ENCODE measurements at regions of chr16 and their contacts with region 1.

Region 1: DNA sequence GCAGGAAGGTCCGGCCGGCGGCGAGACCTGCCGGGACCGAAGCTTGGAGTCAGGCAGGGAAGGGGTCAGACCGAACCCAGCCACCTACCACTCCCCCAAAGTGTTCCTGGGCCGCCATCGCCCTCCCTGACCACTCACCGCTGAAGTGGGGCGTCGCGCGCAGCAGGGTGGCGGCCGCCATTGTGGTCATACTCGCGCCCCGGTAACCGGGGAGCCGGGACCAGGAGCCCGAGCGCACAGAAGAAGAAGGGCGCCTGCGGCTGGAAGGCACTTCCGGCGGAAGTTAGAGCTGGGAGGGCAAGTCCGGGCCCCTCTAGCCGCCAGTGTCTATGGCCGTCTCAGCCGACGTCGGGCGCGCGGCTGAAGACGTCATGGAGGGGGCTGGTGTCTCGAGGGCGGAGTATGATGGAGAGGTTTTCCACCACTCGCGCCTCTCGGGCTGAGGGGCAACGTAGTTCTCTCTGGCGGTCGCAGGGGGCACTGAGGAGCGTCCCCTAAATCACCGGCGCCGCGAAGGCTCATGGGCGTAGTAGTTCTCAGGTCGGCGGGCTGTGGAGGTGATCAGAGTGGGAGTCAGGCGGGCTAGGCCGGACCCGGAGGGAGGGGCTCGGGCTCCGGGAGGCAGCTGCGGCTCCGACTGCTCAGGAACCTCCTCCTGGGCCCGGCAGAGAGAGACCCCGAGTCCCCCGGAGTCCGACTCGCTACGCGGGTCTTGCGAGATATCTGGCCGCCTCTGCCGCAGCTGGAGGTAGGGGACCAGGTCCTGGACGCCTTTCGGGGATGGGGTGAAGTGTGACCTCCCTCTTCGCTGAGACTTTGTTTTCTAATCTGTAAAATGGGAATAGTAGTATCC is at the start of gene TUFM:
- DNase-seq: peak; percentile 91 to 99 (median 94)
- ATAC-seq: peak; percentile 96
- H3K4me3 ChIP-seq: peak within 1 kb of the TSS; percentile 98
- H3K27ac ChIP-seq: peak within 1 kb of the TSS; percentile 87
- H3K4me1 ChIP-seq: peaks cover 4 to 24% of the 10 kb centered on the region in 2 experiments; a peak in 3 of 5 replicates
- H3K27me3 ChIP-seq: no peaks in the 10 kb centered on the region
- CTCF ChIP-seq: peak; percentile 87 to 93 (median 93)
- EP300 ChIP-seq: peak; percentile 50
- POLR2A ChIP-seq: peak; percentile 88
- RAD21 ChIP-seq: peak; percentile 29 to 35; a peak in 2 of 4 replicates
- polyA plus RNA-seq, gene TUFM: 34.1 to 71.2 TPM

Region 2: DNA sequence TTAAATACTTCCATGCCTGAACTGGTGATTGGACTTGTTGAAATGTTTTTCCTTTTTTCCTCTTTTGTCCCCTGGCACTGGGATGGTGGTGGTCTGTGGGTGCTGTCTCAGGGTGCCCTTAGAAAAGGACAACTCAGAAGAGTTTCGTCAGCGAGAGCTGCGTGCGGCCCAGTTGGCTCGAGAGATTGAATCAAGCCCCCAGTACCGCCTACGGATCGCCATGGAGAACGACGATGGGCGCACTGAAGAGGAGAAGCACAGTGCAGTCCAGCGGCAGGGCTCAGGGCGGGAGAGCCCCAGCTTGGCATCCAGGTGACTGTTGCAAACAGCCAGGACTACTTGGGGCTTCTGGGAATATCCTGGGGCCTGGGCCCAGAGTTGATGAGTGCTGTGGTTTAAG is 16.6 kb before region 1 on chr16:
- CTCF ChIA-PET with region 1: no interaction called
- POLR2A ChIA-PET with region 1: interaction called, 100 read pairs
- in situ Hi-C with region 1: no loop called
- intact Hi-C with region 1: no loop called
- DNase-seq: no peak
- ATAC-seq: no peak
- H3K4me3 ChIP-seq: no peak overlapping the region
- H3K27ac ChIP-seq: no peak overlapping the region
- H3K4me1 ChIP-seq: peaks cover 9 to 13% of the 10 kb centered on the region in 2 experiments
- H3K27me3 ChIP-seq: no peaks in the 10 kb centered on the region
- CTCF ChIP-seq: no peak
- EP300 ChIP-seq: no peak
- POLR2A ChIP-seq: no peak
- RAD21 ChIP-seq: no peak

Region 3: GRCh38 chr16:28834873-28835865 is 11.1 kb before region 1 on chr16:
- CTCF ChIA-PET with region 1: no interaction called
- POLR2A ChIA-PET with region 1: interaction called, 100 read pairs
- in situ Hi-C with region 1: no loop called
- intact Hi-C with region 1: no loop called
- DNase-seq: no peak
- ATAC-seq: no peak
- H3K4me3 ChIP-seq: no peak overlapping the region
- H3K27ac ChIP-seq: no peak overlapping the region
- H3K4me1 ChIP-seq: peaks cover 0 to 20% of the 10 kb centered on the region in 2 experiments; a peak in 2 of 5 replicates
- H3K27me3 ChIP-seq: no peaks in the 10 kb centered on the region
- CTCF ChIP-seq: no peak
- EP300 ChIP-seq: no peak
- POLR2A ChIP-seq: peak; percentile 56; the same call in 1 of the 2 replicates
- RAD21 ChIP-seq: no peak

Region 4: DNA sequence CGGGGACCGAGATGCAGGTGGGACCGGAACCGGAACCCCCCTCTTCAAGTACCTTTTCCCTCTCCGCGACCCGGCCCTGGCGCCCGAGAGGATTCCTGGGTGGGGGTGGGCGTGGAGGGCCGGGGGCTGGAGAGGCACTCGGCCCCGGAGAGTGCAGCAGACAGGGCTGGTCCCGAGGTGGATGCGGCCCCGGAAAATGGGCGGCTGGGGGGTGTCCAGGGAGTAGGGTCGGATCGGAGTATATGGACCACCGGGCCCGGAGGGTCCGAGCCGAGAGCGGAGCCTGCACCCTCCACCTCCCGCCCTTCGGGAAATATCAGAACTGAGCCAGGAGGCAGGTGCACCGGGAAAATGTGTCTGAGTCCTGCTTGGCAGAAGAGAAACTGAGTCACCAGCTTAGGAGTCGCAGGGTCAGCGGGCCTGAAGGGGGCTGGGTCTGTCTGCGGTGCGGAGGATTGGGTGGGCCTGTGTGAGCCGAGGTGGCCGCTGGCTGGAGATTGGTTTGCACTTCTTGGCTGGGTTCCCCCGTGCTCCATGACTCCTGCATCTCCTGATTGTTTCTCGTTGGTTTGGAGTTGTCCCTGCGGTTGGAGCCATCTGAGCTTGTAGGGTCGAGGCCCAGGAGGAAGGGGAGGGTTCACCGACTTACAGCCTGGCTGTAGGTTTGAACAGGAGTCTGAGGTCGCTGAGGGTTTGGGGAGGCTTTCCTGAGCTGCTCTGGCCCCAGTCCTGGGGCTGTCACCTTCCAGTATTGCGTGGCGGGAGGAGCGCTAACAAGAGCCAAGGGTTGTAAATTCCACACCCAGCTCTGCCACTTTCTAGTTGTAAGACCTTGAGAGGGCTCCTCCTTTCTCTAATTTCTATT is 17.9 kb after region 1 on chr16:
- CTCF ChIA-PET with region 1: interaction called, 5 read pairs
- POLR2A ChIA-PET with region 1: interaction called, 99 read pairs
- in situ Hi-C with region 1: no loop called
- intact Hi-C with region 1: loop called (anchors 1 kb)
- DNase-seq: peak in 3 of 4 experiments; percentile 24 to 84 (median 41)
- ATAC-seq: peak; percentile 18
- H3K4me3 ChIP-seq: peak overlapping the region; percentile 88
- H3K27ac ChIP-seq: peak overlapping the region; percentile 99
- H3K4me1 ChIP-seq: peaks cover 14 to 28% of the 10 kb centered on the region in 2 experiments
- H3K27me3 ChIP-seq: no peaks in the 10 kb centered on the region
- CTCF ChIP-seq: no peak
- EP300 ChIP-seq: no peak
- POLR2A ChIP-seq: no peak
- RAD21 ChIP-seq: no peak

Region 5: DNA sequence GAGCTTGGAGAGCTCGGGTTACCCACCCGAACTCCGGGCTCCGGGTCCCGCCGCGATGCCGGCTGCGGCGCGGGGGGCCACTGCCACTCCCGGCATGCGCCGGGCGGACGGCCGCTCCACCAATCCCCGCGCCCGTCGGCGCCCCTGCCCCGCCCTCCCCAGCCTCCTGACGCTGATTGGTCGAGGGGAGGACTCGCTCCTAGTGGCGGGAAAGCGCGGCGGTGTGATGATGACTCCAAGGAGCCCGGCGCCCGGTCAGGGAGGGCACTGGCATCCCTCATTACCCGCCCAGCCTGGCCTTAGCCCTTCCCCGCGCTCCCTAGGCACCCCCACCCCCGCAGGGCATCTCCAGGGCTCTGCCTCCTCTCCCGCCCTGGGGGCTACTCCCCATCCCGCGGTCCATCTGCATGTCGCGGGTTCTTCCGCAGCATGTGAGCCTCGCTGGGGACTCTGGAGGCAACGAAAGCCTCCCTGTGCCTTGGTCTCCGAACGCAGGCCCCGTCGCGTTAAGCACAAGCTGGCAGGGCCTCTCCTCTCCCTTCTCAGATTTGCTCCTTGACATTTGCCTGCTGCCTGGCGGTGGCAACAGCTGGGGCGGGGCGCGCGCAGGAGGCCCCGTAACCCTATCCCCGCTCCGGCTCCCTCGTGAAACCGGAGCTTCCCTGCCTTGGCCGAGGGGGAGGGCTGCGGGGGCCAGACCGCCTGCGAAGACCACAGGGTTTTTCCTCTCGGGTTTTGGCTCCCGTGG is 33.7 kb after region 1 on chr16:
- CTCF ChIA-PET with region 1: no interaction called
- POLR2A ChIA-PET with region 1: no interaction called
- in situ Hi-C with region 1: no loop called
- intact Hi-C with region 1: loop called (anchors 5 kb)
- DNase-seq: peak; percentile 95 to 99 (median 99)
- ATAC-seq: peak; percentile 97
- H3K4me3 ChIP-seq: peak overlapping the region; percentile 82
- H3K27ac ChIP-seq: peak overlapping the region; percentile 61
- H3K4me1 ChIP-seq: peaks cover 11 to 67% of the 10 kb centered on the region in 2 experiments; a peak in 4 of 5 replicates
- H3K27me3 ChIP-seq: no peaks in the 10 kb centered on the region
- CTCF ChIP-seq: no peak
- EP300 ChIP-seq: no peak
- POLR2A ChIP-seq: peak; percentile 57; the same call in 1 of the 2 replicates
- RAD21 ChIP-seq: no peak

Region 6: GRCh38 chr16:28891964-28892890 is 45.9 kb after region 1 on chr16:
- CTCF ChIA-PET with region 1: no interaction called
- POLR2A ChIA-PET with region 1: no interaction called
- in situ Hi-C with region 1: no loop called
- intact Hi-C with region 1: no loop called
- DNase-seq: no peak
- ATAC-seq: no peak
- H3K4me3 ChIP-seq: no peak overlapping the region
- H3K27ac ChIP-seq: no peak overlapping the region
- H3K4me1 ChIP-seq: no peaks in the 10 kb centered on the region; a peak in 1 of 5 replicates
- H3K27me3 ChIP-seq: no peaks in the 10 kb centered on the region
- CTCF ChIP-seq: no peak
- EP300 ChIP-seq: no peak
- POLR2A ChIP-seq: no peak
- RAD21 ChIP-seq: no peak

Measured in K562 (cell line).